ENCODE measurements at regions of chr7 and their contacts with region 1.

Region 1: GRCh38 chr7:44200647-44201461 is at the start of gene YKT6:
- DNase-seq: peak; percentile 87
- ATAC-seq: peak; percentile 97
- H3K4me3 Mint-ChIP-seq: peak within 1 kb of the TSS; percentile 87
- H3K27ac Mint-ChIP-seq: peak within 1 kb of the TSS; percentile 12
- H3K4me1 Mint-ChIP-seq: peaks cover 27% of the 10 kb centered on the region
- H3K27me3 Mint-ChIP-seq: peaks cover 6% of the 10 kb centered on the region
- CTCF ChIP-seq: no peak
- total RNA-seq, gene YKT6: 78.2 and 78.7 TPM in 2 replicates

Region 2: GRCh38 chr7:44072364-44073231 is 128.3 kb before region 1 on chr7:
- CTCF ChIA-PET with region 1: interaction called, 11 read pairs
- POLR2A ChIA-PET with region 1: no interaction called
- intact Hi-C with region 1: loop called (anchors 1 kb)
- DNase-seq: no peak
- ATAC-seq: peak; percentile 22
- H3K4me3 Mint-ChIP-seq: no peak overlapping the region
- H3K27ac Mint-ChIP-seq: peak overlapping the region; percentile 90
- H3K4me1 Mint-ChIP-seq: peaks cover 84% of the 10 kb centered on the region
- H3K27me3 Mint-ChIP-seq: no peaks in the 10 kb centered on the region
- CTCF ChIP-seq: no peak

Region 3: DNA sequence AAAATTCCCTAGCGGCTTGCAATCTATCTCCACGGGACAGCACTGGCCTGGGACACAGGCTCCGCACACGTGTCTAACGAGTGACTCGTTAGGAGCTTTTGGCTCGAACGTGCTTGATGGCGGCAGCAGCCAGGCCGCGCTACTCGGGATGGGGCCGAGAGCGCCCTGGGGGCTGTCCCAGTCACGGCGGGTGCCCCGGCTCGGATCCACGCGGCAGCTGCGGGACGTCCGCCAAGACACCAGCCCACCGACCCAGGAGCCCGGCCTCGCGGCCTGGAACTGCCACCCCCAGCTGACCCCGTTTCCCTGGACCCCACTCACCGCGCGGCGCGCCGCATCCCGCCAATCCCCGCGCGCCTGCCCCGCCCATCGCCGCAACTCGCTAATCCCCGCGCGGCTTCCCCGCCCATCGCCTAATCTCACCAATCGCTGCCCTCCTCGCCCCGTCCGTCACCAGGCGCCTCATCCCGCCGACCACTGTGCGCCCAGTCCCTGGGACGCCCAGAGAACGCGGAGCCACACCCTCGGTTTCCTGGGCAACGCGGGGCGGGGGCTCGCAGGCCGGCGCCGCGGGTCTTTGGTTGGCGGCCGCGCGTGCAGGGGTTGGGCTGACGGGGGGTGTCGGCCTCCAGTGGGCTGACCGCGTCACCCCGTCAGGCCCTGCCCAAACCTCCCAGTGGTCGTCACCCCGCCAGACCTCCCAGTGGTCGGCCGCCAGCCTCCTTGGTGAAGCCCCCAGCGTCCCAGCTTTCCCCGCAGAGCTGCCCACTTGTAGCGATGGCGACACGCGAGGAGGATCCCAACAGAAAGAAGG is 77.5 kb before region 1 on chr7 and contains the start of gene POLD2:
- CTCF ChIA-PET with region 1: interaction called, 4 read pairs
- POLR2A ChIA-PET with region 1: interaction called, 7 read pairs
- intact Hi-C with region 1: loop called (anchors 1 kb)
- DNase-seq: peak; percentile 96
- ATAC-seq: peak; percentile 98
- H3K4me3 Mint-ChIP-seq: peak within 1 kb of the TSS; percentile 88
- H3K27ac Mint-ChIP-seq: peak within 1 kb of the TSS; percentile 79
- H3K4me1 Mint-ChIP-seq: peaks cover 25% of the 10 kb centered on the region
- H3K27me3 Mint-ChIP-seq: no peaks in the 10 kb centered on the region
- CTCF ChIP-seq: no peak
- total RNA-seq, gene POLD2: 146 and 147 TPM in 2 replicates

Region 4: DNA sequence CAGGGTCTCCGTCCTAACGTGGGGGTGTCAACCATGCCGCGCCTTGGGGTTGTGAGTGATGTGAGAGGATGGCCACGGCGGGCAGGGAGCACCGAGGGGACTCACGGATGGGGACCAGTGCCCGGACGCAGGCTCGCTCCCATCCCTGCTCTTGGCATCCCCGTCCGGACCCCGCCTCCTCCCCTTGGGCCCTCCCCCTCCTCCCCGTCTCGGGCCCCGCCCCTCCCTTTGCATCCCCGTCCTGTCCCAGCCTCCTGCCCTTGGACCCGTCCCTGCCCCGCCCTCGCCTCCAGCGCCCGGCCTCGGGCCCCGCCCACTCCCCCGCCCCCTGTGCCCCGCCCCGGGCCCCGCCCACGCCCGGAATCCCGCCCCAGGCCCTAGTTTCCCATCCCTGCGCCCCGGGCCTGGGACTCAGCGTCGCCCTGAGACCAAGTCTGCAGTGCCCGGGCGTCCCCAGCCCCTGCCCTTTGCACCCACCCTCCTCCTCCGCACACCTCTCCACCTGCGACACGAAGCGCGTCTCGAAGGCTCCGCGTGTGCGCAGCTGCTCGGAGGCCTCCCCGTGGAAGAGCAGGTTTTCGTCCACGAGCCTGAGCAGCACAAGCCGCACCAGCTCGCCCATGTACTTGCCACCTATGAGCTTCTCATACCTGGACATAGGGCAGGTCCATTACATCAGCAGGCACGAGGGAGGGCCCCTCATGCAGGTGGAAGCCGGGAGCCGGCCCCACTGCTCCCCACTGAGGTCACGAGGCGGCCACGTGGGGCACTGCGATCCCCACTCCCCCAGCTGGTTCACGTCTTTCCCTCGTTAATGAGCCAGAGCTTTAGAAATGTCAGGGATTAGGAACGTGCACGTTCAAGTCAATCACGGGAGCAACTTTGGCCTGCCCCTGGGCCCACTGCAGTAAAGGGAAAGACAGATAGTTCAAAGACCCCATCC is 54.6 kb before region 1 on chr7:
- CTCF ChIA-PET with region 1: no interaction called
- POLR2A ChIA-PET with region 1: no interaction called
- intact Hi-C with region 1: loop called (anchors 2 kb)
- DNase-seq: peak; percentile 55
- ATAC-seq: peak; percentile 85
- H3K4me3 Mint-ChIP-seq: peak overlapping the region; percentile 78
- H3K27ac Mint-ChIP-seq: no peak overlapping the region
- H3K4me1 Mint-ChIP-seq: peaks cover 18% of the 10 kb centered on the region
- H3K27me3 Mint-ChIP-seq: no peaks in the 10 kb centered on the region
- CTCF ChIP-seq: no peak

Region 5: DNA sequence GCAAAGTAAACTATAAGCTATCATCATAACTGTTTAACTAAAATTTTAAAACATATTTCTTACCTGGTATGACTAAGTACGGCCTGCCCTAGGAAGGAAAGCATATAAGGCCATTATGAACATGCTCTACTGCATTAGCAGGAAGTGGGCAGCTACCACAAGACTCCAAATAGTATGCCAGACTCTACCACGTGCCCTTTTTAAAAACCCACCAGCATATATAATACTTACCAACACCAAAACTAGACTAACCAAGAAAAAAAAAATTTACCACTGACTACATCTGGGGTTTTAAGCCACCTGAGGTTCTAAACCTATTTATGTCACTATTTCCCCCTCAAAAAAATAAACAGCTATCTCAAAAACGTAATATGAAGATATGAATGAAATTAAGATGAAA is 259.5 kb after region 1 on chr7:
- CTCF ChIA-PET with region 1: no interaction called
- POLR2A ChIA-PET with region 1: no interaction called
- intact Hi-C with region 1: loop called (anchors 1 kb)
- DNase-seq: no peak
- ATAC-seq: peak; percentile 99
- H3K4me3 Mint-ChIP-seq: peak overlapping the region; percentile 59
- H3K27ac Mint-ChIP-seq: peak overlapping the region; percentile 13
- H3K4me1 Mint-ChIP-seq: peaks cover 48% of the 10 kb centered on the region
- H3K27me3 Mint-ChIP-seq: no peaks in the 10 kb centered on the region
- CTCF ChIP-seq: no peak

Region 6: DNA sequence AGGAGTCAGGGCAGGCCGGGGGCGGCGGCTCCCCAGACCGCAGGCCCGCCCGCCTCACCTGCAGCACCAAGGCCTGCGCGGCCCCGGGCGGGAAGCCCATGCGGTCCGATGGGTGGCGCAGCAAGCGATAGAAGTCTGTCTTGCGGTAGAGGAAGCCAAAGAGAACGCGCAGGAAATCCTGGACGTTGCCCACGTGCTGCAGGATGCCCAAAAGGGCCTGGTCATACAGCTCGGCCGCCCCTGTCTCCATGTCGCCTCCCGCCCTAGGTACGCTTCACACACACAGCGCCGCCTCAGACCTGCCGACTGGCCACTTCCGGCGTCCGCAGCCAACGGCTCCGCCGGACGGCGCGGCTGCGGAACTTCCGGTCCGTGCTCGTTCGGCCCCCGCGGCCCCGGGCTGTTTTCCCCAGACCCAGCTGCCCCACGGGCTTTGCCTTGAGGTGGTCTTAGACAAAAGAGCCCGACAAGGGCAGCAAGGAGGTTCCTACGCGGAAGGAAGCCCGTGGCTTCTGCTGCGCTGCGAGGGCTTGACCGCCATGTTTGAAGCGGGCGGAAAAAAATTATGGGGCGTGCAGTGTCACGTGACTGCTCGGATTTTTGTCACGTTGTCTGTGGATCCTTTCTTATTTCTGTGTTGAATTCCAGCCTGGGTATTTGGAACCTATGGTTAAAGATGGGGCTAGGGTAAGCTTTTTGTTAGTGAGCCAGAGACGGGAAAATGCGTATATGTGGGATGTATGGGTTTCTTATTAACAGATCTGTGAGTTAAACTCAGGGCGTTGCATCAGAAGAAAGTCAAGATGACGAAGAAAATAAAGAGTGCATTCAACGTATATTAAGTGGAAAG is 289.7 kb after region 1 on chr7 and contains the start of gene NUDCD3:
- CTCF ChIA-PET with region 1: no interaction called
- POLR2A ChIA-PET with region 1: interaction called, 11 read pairs
- intact Hi-C with region 1: loop called (anchors 2 kb)
- DNase-seq: peak; percentile 80
- ATAC-seq: peak; percentile 84
- H3K4me3 Mint-ChIP-seq: peak within 1 kb of the TSS; percentile 90
- H3K27ac Mint-ChIP-seq: peak within 1 kb of the TSS; percentile 97
- H3K4me1 Mint-ChIP-seq: peaks cover 46% of the 10 kb centered on the region
- H3K27me3 Mint-ChIP-seq: peaks cover 5% of the 10 kb centered on the region
- CTCF ChIP-seq: no peak
- total RNA-seq, gene NUDCD3: 80.7 and 85.1 TPM in 2 replicates